Right ventricle myocardium inferior (tissue), 1 donor: ENCODE measurements at regions of chr12 and their contacts with region 1.

Region 1: DNA sequence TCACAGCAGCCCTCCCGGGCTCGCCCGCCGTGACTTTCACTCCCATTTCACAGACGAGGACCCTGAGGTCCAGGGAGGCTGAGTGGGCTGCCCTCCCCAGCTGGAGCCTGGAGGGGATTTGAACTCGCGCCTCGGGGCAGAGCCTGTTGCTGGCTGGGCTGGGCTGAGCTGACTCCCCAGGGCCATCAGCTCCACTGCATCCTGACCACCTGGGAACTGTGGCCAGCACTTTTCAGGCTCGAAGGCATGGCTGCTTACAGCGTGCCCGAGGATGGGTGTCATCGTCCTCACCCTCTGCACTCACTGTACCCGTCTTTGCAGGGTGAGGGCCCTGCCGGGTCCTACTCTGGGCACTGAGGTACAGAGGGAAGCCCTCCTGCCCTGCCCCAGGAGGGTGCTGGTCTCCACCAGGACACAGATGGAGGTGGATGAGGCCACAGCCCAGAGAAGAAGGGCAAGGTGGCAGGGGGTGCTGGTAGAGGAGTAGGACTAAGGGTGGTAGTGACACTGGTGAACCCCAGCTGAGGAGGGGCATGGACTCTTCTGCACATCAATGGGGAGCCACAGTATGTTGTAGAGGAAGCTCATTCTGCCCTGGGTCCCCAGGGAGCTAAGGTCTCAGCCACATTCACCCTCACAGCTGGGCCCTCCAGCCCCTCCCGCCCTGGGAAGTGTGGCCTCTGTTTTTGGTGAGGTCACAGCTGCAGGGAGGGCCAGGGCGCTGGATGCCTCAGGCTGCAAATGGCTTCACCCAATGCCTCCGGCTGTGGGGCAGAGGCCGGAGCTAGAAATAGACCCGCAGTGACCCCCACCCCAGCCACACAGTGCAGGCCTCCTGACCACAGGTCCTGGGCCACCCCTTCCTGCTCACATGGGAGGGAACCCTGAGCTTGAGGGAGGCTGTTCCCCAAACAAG is 365.1 kb upstream of the SFSWAP start:
- DNase-seq: no peak
- ATAC-seq: no peak

Region 2: GRCh38 chr12:130849561-130850417 is 496.0 kb before region 1 on chr12:
- intact Hi-C with region 1: no loop called
- DNase-seq: no peak
- ATAC-seq: no peak

Region 3: DNA sequence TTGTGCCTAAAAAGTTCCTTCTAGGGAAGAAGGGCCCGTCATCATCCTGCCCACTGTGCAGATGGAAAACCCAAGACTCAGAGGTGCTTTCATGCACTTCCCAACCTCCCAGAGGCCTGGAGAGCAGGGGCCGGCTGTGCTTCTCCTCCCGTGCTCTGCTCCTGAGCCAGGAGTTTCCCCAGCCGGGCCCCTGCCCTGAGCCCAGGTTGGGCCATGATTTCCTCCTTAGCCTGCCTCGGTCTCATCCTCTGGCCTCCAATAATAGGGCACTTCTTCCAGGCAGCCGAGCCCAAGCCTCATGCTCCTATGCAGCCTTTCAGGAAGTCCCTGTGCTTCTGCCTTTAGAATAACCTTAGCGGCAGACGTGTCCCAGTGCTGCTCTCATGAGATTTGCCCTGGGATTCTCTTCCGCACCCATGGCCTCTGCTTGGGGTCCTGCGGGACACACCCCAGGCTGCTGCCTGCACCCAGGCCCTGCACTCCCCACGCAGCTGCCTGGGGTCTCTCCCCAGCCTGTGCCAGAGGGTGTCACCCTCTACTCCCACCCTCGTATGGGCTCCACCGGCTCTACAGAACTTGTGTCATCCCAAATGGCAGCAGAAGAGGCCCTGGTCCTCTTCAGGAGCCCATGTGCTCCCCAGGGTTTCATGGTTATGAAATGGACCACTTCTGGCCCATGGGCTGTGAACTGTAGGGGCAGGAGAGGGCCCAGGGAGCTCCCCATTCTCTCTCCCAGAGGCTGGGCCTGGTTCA is 32.8 kb before region 1 on chr12:
- intact Hi-C with region 1: no loop called
- DNase-seq: no peak
- ATAC-seq: no peak

Region 4: GRCh38 chr12:131621701-131622421 is 276.1 kb after region 1 on chr12:
- intact Hi-C with region 1: loop called (anchors 2 kb)
- DNase-seq: peak; percentile 62
- ATAC-seq: no peak